Spleen (tissue), 13 donors: ENCODE measurements at regions of chr1 and their contacts with region 1.

Region 1: GRCh38 chr1:26541816-26542711 is 12.5 kb downstream of the RPS6KA1 start:
- DNase-seq: peak; percentile 96
- H3K4me3 ChIP-seq: peak overlapping the region in 6 of 8 donors; percentile 4 to 83 (median 26)
- H3K27ac ChIP-seq: peak overlapping the region; percentile 90 to 99 (median 97)
- H3K4me1 ChIP-seq: peaks cover 63 to 100% (median 97%) of the 10 kb centered on the region in 6 donors
- H3K27me3 ChIP-seq: no peaks in the 10 kb centered on the region
- CTCF ChIP-seq: peak; percentile 55 to 94 (median 88)
- POLR2A ChIP-seq: peak in 1 of 3 donors; percentile 47

Region 2: GRCh38 chr1:26496861-26497260 is 45.2 kb before region 1 on chr1:
- intact Hi-C with region 1: loop called (anchors 10 kb)
- DNase-seq: no peak
- H3K4me3 ChIP-seq: no peak overlapping the region
- H3K27ac ChIP-seq: no peak overlapping the region
- H3K4me1 ChIP-seq: peaks cover 7 to 30% (median 15%) of the 10 kb centered on the region in 6 donors
- H3K27me3 ChIP-seq: no peaks in the 10 kb centered on the region
- CTCF ChIP-seq: no peak
- POLR2A ChIP-seq: no peak